OCI-LY7 (cell line): ENCODE measurements at regions of chr17 and their contacts with region 1.

Region 1: DNA sequence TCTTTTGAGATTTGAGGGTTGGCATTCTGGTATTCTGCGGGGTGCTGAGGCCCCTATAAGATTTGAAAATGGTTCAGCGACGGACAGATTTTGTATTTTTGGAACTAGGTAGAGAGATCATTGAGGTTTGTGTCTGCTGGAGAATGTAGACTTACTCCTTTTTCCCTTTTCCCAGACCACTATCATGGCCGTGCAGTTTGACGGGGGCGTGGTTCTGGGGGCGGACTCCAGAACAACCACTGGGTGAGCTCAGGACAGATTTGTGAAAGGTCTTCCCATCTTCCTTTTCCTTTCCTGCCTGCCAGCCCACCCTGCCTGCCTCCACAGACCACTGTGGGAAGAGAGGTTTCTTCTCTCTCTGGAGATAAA is 573 bp downstream of the PSMB6 start:
- DNase-seq: no peak
- H3K4me3 ChIP-seq: peak overlapping the region; percentile 85
- H3K27ac ChIP-seq: peak overlapping the region; percentile 37
- H3K4me1 ChIP-seq: peaks cover 6% of the 10 kb centered on the region
- CTCF ChIP-seq: no peak

Region 2: GRCh38 chr17:4806777-4807604 is 10.5 kb after region 1 on chr17 and contains the start of gene PLD2:
- CTCF ChIA-PET with region 1: no interaction called
- POLR2A ChIA-PET with region 1: no interaction called
- intact Hi-C with region 1: loop called (anchors 1 kb)
- DNase-seq: peak; percentile 91
- H3K4me3 ChIP-seq: peak within 1 kb of the TSS; percentile 86
- H3K27ac ChIP-seq: no peak within 1 kb of the TSS
- H3K4me1 ChIP-seq: peaks cover 12% of the 10 kb centered on the region
- CTCF ChIP-seq: no peak
- total RNA-seq, gene PLD2: 6.6 and 10.2 TPM in 2 replicates